ENCODE measurements at regions of chr14 and their contacts with region 1.

Region 1: DNA sequence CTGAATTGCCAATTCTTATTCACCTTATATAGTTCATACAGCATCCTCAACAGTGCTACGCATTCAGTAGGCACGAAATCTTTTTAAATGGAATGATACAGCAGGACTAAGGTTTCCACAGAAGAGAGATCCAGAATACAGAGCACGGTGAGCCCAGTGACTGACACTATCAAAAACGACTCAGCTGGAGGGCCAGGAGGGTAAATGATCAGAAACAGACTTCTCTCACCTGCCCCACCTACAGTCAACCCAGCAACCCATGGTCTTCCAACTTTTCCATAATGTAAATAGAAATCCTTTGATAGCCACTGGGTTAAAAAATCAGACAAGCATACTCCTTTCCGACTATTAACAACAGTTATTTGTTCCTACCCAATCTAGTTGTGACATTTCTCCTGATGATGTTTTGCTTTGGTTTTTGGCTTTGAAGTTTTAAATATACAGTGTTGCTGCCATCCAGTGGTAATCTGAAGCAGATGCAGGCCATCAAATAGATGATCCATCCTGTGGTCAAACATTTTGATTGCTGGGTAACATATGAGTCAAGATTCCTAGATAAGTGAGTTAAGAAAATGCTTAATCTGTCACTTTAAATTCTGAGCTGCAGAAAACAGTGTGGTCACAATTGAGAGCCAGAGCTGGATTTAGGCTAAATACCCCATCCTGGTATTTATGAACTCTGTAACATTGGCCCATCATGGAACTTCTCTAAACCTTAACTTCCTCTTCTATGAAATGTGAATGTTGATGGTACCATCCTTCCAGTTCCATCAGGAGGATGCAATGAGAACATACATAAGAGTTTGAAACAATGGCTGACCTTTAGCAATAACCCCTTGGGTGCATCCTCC is 42.0 kb downstream of the GPHB5 start:
- DNase-seq: peak in 2 of 9 donors; percentile 5
- ATAC-seq: no peak
- H3K4me3 ChIP-seq: no peak overlapping the region
- H3K4me3 Mint-ChIP-seq: no peak overlapping the region
- H3K27ac ChIP-seq: no peak overlapping the region
- H3K27ac Mint-ChIP-seq: no peak overlapping the region
- H3K4me1 ChIP-seq: no peaks in the 10 kb centered on the region
- H3K4me1 Mint-ChIP-seq: no peaks in the 10 kb centered on the region
- H3K27me3 ChIP-seq: no peaks in the 10 kb centered on the region
- H3K27me3 Mint-ChIP-seq: peaks cover 0 to 9% (median 3%) of the 10 kb centered on the region in 5 donors

Region 2: GRCh38 chr14:62162998-62163589 is 1113.6 kb before region 1 on chr14:
- CTCF ChIA-PET with region 1: no interaction called
- POLR2A ChIA-PET with region 1: no interaction called
- intact Hi-C with region 1: loop called in 1 of 2 experiments (anchors 1 kb)
- DNase-seq: peak in 6 of 9 donors; percentile 3 to 23 (median 12)
- ATAC-seq: no peak
- H3K4me3 ChIP-seq: no peak overlapping the region
- H3K4me3 Mint-ChIP-seq: no peak overlapping the region
- H3K27ac ChIP-seq: no peak overlapping the region
- H3K27ac Mint-ChIP-seq: no peak overlapping the region
- H3K4me1 ChIP-seq: no peaks in the 10 kb centered on the region
- H3K4me1 Mint-ChIP-seq: no peaks in the 10 kb centered on the region
- H3K27me3 ChIP-seq: no peaks in the 10 kb centered on the region
- H3K27me3 Mint-ChIP-seq: peaks cover 18 to 66% (median 47%) of the 10 kb centered on the region in 5 donors

Region 3: GRCh38 chr14:62179367-62180018 is 1097.2 kb before region 1 on chr14:
- CTCF ChIA-PET with region 1: no interaction called
- POLR2A ChIA-PET with region 1: no interaction called
- intact Hi-C with region 1: loop called in 1 of 2 experiments (anchors 1 kb)
- DNase-seq: peak in 1 of 9 donors; percentile 1
- ATAC-seq: no peak
- H3K4me3 ChIP-seq: no peak overlapping the region
- H3K4me3 Mint-ChIP-seq: no peak overlapping the region
- H3K27ac ChIP-seq: no peak overlapping the region
- H3K27ac Mint-ChIP-seq: no peak overlapping the region
- H3K4me1 ChIP-seq: no peaks in the 10 kb centered on the region
- H3K4me1 Mint-ChIP-seq: no peaks in the 10 kb centered on the region
- H3K27me3 ChIP-seq: no peaks in the 10 kb centered on the region
- H3K27me3 Mint-ChIP-seq: peaks cover 2 to 43% (median 38%) of the 10 kb centered on the region in 5 donors